Esophagus muscularis mucosa (tissue), 4 donors: ENCODE measurements at regions of chr1 and their contacts with region 1.

Region 1: DNA sequence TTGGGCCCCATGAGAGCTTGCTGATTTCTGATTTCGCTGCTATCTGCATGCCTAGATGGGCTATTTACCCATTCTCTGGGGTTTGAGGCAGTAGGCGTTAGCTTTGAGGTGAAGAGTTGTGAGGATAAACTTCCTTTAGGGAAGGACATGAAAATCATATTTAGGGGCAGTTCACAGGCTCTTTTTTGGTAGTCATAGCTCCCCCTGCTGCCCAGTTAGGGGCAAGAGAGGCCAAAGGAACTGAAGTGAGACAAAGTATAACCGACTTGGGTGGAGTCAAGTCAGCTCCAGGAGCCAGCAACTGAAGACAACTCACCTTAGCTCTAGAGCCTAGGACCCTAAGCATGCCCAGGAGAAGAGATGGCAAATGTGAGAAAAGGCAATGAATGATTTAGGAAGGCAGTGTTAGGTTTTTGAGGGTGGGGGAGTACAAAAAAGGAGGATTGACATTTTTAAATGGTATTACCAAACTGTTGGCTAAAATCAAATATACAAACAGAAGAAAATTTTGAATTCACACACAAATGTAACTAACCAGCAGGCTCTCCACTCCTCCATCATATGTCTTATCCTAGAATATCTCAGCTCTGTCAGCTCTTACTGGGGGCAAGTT is 625.2 kb downstream of the LMO4 start:
- DNase-seq: no peak
- H3K4me3 ChIP-seq: no peak overlapping the region
- H3K27ac ChIP-seq: no peak overlapping the region
- H3K4me1 ChIP-seq: peaks cover 0 to 32% (median 15%) of the 10 kb centered on the region in 4 donors
- H3K27me3 ChIP-seq: no peaks in the 10 kb centered on the region
- CTCF ChIP-seq: peak; percentile 78 to 86 (median 80)
- EP300 ChIP-seq: no peak
- POLR2A ChIP-seq: no peak

Region 2: DNA sequence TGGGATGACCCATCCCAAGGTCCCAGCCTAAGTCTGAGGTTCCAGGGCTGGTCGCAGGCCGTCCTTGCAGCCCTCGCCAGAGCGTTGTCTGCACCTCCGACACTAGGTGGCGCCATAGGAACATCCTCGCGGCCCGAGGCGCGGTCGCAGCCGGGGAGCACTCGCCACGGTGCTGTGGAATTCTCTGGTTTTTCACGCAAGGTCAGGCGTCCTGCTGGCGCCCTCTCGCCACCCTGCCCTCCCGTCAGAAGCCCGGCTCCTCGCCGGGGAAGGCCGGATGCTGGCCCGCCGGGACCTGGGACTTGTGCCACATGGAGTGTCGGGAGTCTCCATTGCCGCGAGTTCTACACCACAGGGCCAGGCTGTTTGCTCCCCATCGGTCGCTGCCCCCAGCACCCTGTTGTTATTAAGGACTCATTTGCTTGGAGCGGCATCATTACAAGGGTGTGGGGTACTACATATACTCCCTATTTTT is 822.0 kb before region 1 on chr1:
- intact Hi-C with region 1: loop called (anchors 10 kb)
- DNase-seq: no peak
- H3K4me3 ChIP-seq: peak overlapping the region; percentile 45 to 62 (median 55)
- H3K27ac ChIP-seq: peak overlapping the region in 3 of 4 donors; percentile 58 to 59 (median 58)
- H3K4me1 ChIP-seq: peaks cover 5 to 42% (median 36%) of the 10 kb centered on the region in 4 donors
- H3K27me3 ChIP-seq: no peaks in the 10 kb centered on the region
- CTCF ChIP-seq: peak; percentile 80 to 96 (median 89)
- EP300 ChIP-seq: no peak
- POLR2A ChIP-seq: no peak

Region 3: DNA sequence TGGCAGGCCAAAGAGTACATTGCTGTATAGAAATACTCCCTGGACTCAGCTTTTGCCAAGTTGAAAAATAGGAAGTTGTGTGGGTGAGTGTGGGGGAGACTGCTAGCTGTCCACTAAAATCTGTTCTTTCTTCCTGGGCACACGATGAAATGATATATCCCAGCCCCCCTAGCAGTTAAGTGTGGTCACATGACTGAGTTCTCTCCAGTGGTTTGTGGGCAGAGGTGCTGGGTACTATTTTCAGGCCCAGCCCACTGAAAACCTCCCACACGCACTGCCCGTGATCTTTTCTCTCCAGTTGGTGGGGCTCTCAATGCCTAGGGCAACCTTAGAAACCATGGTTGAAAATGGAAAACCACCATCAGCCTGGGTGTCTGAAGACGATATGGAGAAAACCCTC is 744.9 kb before region 1 on chr1:
- intact Hi-C with region 1: no loop called
- DNase-seq: peak; percentile 47
- H3K4me3 ChIP-seq: no peak overlapping the region
- H3K27ac ChIP-seq: no peak overlapping the region
- H3K4me1 ChIP-seq: peaks cover 0 to 7% (median 6%) of the 10 kb centered on the region in 4 donors
- H3K27me3 ChIP-seq: no peaks in the 10 kb centered on the region
- CTCF ChIP-seq: no peak
- EP300 ChIP-seq: no peak
- POLR2A ChIP-seq: no peak

Region 4: DNA sequence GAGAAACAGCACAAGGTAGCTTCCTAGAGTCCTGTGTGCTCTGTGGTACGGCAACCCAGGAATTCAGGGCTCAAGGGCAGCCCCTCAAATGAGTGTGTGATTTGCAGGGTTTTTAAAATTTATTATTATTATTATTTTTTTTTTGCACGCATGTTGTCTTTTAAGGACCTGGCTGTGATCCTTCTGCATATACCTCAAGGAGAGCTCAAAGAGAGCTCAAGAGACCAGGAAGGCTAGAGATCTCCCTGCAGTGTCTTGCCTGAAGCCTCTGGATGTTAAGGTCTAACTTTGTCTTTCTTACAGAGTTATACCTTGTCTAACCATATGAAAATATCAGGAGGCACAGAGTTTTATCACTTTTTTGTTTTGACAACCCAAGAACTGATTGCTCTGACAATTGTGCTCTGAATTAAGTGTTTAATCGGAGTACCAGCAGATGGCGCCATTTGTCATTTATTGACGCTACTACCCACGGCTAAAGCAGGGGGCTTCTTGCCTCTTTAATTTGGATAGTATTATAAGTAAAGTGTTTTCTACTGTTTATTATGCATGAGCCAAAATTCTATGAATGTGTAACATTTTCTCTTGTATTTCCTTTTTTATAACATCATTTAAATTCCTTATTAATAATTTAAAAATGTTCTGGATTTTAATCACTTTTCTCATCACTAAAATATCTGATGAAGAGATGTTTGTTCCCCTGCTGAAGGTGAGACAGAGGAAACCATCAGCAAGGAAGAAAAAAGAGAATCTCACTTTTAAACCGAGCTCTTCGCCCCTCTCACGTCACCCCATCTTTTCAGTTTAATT is 660.9 kb before region 1 on chr1:
- intact Hi-C with region 1: loop called (anchors 2 kb)
- DNase-seq: no peak
- H3K4me3 ChIP-seq: no peak overlapping the region
- H3K27ac ChIP-seq: no peak overlapping the region
- H3K4me1 ChIP-seq: no peaks in the 10 kb centered on the region
- H3K27me3 ChIP-seq: no peaks in the 10 kb centered on the region
- CTCF ChIP-seq: peak; percentile 72 to 77 (median 74)
- EP300 ChIP-seq: no peak
- POLR2A ChIP-seq: no peak

Region 5: DNA sequence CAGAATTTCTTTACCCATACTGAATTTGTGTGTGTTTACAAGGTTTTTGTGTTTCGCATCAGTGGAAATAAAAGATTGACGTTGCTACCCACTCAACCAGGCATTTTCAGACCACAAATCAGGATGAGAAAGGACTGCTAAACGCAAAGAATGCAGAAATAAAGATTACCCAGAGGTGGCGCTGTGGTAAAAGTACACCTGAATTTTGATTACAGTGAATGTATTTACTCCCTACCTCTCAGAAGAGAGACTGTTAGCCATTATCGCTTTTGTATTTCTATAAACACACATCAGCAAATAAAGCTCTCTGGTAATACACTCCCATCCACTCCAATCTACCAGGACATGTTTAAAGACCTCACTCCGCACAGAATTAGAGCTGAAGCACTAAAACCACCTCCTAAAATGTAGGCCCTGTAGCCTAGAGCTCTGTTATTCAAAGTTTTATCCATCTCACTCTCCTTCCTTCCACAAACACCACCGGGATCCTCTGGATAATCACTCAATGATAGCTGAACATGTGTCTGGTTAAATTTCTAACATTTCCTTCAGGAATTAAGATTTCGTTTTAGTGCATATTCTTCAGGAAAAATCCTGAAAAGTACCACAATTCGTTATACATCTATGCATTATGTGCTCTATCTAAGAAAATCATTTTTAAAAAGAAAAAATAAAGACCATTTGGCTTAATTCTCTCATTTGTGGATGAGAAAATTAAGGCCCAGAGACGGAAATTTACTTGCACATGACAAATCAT is 627.7 kb before region 1 on chr1:
- intact Hi-C with region 1: loop called (anchors 2 kb)
- DNase-seq: no peak
- H3K4me3 ChIP-seq: no peak overlapping the region
- H3K27ac ChIP-seq: peak overlapping the region in 1 of 4 donors; percentile 89
- H3K4me1 ChIP-seq: peaks cover 7 to 17% (median 10%) of the 10 kb centered on the region in 4 donors
- H3K27me3 ChIP-seq: no peaks in the 10 kb centered on the region
- CTCF ChIP-seq: peak; percentile 74 to 86 (median 74)
- EP300 ChIP-seq: no peak
- POLR2A ChIP-seq: no peak

Region 6: GRCh38 chr1:87426463-87427249 is 527.2 kb before region 1 on chr1:
- intact Hi-C with region 1: no loop called
- DNase-seq: no peak
- H3K4me3 ChIP-seq: no peak overlapping the region
- H3K27ac ChIP-seq: no peak overlapping the region
- H3K4me1 ChIP-seq: no peaks in the 10 kb centered on the region
- H3K27me3 ChIP-seq: no peaks in the 10 kb centered on the region
- CTCF ChIP-seq: no peak
- EP300 ChIP-seq: no peak
- POLR2A ChIP-seq: no peak

Region 7: GRCh38 chr1:87826681-87827251 is 127.1 kb before region 1 on chr1:
- intact Hi-C with region 1: no loop called
- DNase-seq: no peak
- H3K4me3 ChIP-seq: peak overlapping the region in 2 of 4 donors; percentile 18 to 39
- H3K27ac ChIP-seq: no peak overlapping the region
- H3K4me1 ChIP-seq: no peaks in the 10 kb centered on the region
- H3K27me3 ChIP-seq: no peaks in the 10 kb centered on the region
- CTCF ChIP-seq: no peak
- EP300 ChIP-seq: no peak
- POLR2A ChIP-seq: no peak